ENCODE measurements at regions of chr10 and their contacts with region 1.

Region 1: GRCh38 chr10:77165445-77166208 is 472.0 kb downstream of the KCNMA1 start:
- DNase-seq: peak in 4 of 5 donors; percentile 30 to 40 (median 32)
- H3K4me3 ChIP-seq: no peak overlapping the region
- H3K27ac ChIP-seq: no peak overlapping the region
- H3K4me1 ChIP-seq: no peaks in the 10 kb centered on the region
- H3K27me3 ChIP-seq: no peaks in the 10 kb centered on the region
- CTCF ChIP-seq: peak; percentile 50 to 76 (median 70)
- EP300 ChIP-seq: no peak
- POLR2A ChIP-seq: no peak

Region 2: DNA sequence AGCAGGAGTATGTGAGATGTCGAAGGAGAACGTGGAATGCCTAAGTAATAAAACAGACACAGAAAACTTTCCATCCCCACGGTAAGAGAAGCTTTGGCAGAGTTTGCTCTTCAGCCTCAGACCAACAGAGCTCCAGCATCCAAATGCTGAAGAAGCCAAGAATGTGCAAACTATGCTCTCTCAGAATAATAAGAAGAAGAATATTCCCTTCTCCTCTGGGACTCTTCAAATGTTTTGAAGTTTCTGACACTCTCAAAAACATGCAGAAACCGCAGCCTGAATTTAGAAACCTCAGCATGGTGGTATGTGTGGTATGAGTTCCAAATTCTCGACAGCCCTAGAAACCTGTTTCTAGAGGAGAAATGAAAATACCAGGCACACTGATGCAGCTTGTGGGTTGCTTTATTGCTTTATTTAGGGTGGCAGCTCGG is 358.7 kb after region 1 on chr10:
- intact Hi-C with region 1: loop called in 1 of 4 experiments (anchors 10 kb)
- DNase-seq: no peak
- H3K4me3 ChIP-seq: no peak overlapping the region
- H3K27ac ChIP-seq: no peak overlapping the region
- H3K4me1 ChIP-seq: peaks cover 1% of the 10 kb centered on the region
- H3K27me3 ChIP-seq: no peaks in the 10 kb centered on the region
- CTCF ChIP-seq: no peak
- EP300 ChIP-seq: no peak
- POLR2A ChIP-seq: no peak

Region 3: GRCh38 chr10:77641788-77642397 is 476.3 kb after region 1 on chr10:
- intact Hi-C with region 1: loop called in 3 of 4 experiments (anchors 5 kb)
- DNase-seq: peak in 4 of 5 donors; percentile 42 to 72 (median 60)
- H3K4me3 ChIP-seq: no peak overlapping the region
- H3K27ac ChIP-seq: no peak overlapping the region
- H3K4me1 ChIP-seq: peaks cover 3% of the 10 kb centered on the region
- H3K27me3 ChIP-seq: no peaks in the 10 kb centered on the region
- CTCF ChIP-seq: peak; percentile 61 to 87 (median 80)
- EP300 ChIP-seq: no peak
- POLR2A ChIP-seq: no peak

Region 4: DNA sequence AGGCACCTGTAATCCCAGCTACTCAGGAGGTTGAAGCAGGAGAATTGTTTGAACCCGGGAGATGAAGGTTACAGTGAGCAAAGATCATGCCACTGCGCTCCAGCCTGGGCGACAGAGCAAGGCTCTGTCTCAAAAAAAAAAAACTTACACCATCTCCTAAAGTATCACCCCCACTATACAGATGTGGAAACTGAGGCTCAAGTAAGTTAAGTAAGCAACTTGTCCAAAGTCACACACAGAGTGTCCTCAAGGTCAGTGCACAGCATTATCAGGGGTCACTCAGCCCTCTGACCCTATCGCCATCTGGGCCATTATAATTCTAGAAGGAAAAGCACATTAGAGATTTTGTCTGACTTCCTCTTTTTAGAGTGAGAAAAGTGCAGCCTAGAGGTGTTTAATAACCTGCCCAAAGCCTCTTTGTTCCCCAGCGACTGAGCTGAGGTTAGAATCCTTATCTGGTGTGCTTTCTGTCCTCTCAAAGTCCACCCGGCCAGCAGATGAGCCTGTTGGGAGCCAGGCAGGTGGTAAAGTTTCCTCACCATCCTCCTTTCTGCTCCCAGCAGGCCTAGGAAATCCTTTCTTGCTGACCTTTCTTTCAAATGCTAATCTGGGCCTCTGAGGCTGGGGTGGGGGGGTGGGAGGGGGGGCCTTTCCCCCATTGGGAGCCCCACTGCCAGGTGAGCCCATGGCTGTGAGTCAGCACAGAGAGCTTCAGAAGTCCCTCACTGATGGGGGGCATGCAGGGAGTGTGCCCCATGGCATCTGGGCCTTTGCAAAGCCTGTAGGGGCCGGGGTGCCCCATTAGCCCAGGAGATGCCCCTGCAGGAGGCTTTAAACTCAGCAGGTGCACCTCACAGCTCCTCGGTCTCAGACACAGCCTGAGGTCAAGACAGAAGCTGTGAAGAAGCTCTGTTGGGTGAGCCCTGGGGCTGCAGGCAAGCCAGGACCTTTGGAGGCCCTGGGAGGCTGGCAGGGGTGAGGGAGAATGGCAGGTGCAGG is 484.0 kb after region 1 on chr10:
- intact Hi-C with region 1: loop called in 2 of 4 experiments (anchors 5 kb)
- DNase-seq: no peak
- H3K4me3 ChIP-seq: no peak overlapping the region
- H3K27ac ChIP-seq: no peak overlapping the region
- H3K4me1 ChIP-seq: no peaks in the 10 kb centered on the region
- H3K27me3 ChIP-seq: no peaks in the 10 kb centered on the region
- CTCF ChIP-seq: no peak
- EP300 ChIP-seq: no peak
- POLR2A ChIP-seq: no peak

Region 5: GRCh38 chr10:77710759-77711682 is 545.4 kb after region 1 on chr10:
- intact Hi-C with region 1: loop called in 2 of 4 experiments (anchors 5 kb)
- DNase-seq: peak; percentile 48 to 87 (median 66)
- H3K4me3 ChIP-seq: peak overlapping the region; percentile 33
- H3K27ac ChIP-seq: no peak overlapping the region
- H3K4me1 ChIP-seq: peaks cover 2% of the 10 kb centered on the region
- H3K27me3 ChIP-seq: no peaks in the 10 kb centered on the region
- CTCF ChIP-seq: peak; percentile 57 to 82 (median 79)
- EP300 ChIP-seq: no peak
- POLR2A ChIP-seq: no peak